PC-3 (cell line): ENCODE measurements at regions of chr18 and their contacts with region 1.

Region 1: GRCh38 chr18:73509460-73509859 is 638.2 kb downstream of the FBXO15 start:
- DNase-seq: no peak
- ATAC-seq: no peak
- H3K4me3 ChIP-seq: no peak overlapping the region
- H3K27ac ChIP-seq: no peak overlapping the region
- H3K4me1 ChIP-seq: no peaks in the 10 kb centered on the region
- H3K27me3 ChIP-seq: no peaks in the 10 kb centered on the region
- CTCF ChIP-seq: no peak

Region 2: GRCh38 chr18:73446502-73446901 is 63.0 kb before region 1 on chr18:
- CTCF ChIA-PET with region 1: no interaction called
- POLR2A ChIA-PET with region 1: interaction called, 4 read pairs
- intact Hi-C with region 1: loop called (anchors 10 kb)
- DNase-seq: peak; percentile 46
- ATAC-seq: no peak
- H3K4me3 ChIP-seq: no peak overlapping the region
- H3K27ac ChIP-seq: no peak overlapping the region
- H3K4me1 ChIP-seq: no peaks in the 10 kb centered on the region
- H3K27me3 ChIP-seq: no peaks in the 10 kb centered on the region
- CTCF ChIP-seq: no peak